ENCODE measurements at regions of chrX and their contacts with region 1.

Region 1: DNA sequence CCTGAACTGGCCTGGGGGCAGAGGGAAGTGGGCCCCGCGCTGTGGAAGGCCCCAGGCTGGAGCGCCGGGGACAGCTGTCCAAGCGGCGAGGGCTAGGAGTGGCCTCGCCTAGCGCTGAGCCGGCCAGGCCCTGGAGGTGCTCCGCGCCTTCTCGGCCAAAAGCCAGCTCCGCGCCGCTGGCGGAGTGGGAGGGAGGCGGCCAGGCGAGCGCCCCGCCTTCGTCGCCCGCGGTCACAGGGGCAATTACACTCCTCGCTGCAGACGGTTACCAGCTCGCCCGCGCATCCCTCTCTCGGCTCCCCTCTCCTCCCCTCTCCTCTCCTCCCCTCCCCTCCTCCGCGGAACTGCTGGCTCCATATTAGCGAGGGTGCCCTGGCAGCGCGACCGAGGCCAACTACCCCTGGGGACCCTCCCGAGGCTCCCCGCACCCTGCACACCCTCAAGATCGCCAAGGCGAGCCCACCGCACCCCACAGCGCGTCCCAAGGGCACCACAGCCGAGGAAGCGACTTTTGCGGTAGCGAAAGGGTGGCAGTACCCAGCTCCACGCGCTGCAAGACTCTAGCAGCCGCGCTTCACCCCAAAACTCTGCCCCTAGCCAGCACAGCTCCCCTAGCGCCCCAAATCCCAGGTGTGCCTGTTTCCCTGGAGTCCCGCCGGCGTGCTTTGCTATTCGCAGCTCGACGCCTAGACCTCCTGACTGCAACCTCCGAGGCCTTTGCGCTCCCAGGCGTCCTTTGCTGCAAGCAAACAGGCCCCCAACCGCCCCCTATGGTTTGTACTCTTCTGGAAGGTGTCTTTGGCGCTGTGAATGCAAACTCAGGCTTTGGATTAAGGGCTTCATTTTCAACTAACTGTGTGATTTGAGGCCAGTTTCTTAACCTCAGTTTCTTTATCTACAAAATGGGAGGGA is 91.4 kb downstream of the BCOR start:
- DNase-seq: peak in 6 of 7 donors; percentile 32 to 62 (median 36)
- H3K4me3 ChIP-seq: no peak overlapping the region
- H3K27ac ChIP-seq: no peak overlapping the region
- H3K4me1 ChIP-seq: no peaks in the 10 kb centered on the region
- H3K27me3 ChIP-seq: peaks cover 60% of the 10 kb centered on the region
- CTCF ChIP-seq: no peak
- POLR2A ChIP-seq: no peak

Region 2: DNA sequence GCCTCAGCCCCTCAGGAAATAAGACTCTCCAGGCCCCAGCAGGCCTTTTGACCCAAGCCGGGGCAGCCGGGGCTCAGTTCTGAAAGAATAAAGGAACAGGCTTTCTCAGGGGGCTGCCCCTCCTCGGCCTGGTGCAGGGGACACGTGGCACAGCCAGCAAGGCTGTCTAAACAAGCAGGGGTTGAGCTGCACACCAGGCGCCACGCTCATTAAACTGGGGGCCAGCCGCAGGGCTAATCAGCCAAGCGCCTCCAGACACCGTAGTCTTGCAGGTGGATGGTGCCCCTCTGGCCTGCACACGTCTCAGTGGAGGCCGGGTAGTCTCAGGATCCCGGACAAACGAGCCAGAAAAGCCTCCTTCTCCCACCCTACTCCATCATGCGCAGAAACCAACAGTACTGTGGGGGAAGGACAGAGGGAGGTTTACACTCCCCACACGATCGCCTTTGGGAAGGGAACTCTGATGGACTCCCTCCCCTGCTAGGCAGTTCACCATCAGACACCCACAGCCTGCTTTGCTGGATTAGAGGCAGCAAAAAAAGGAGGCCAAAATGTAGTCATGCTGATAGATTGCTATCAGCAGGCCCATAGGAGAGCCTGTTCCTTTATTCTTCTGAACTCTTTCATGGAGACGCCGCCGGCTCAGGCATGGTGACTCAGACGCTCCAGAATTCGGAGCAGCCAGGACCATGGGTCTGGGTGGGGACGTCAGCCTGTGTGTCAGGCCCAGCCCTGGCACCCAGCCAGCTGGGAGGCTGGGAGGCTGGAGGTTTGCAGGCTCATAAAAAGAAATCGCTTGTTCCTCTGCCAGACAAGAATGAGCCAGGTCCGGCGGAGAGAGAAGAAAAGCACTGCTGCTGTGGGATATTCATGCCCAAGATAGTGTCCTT is 251.0 kb before region 1 on chrX:
- intact Hi-C with region 1: no loop called
- DNase-seq: peak; percentile 83 to 94 (median 91)
- H3K4me3 ChIP-seq: no peak overlapping the region
- H3K27ac ChIP-seq: peak overlapping the region; percentile 51 to 87 (median 68)
- H3K4me1 ChIP-seq: no peaks in the 10 kb centered on the region
- H3K27me3 ChIP-seq: no peaks in the 10 kb centered on the region
- CTCF ChIP-seq: no peak
- POLR2A ChIP-seq: peak in 1 of 2 donors; percentile 68

Region 3: GRCh38 chrX:39848900-39849299 is 157.5 kb before region 1 on chrX:
- intact Hi-C with region 1: loop called in 1 of 2 experiments (anchors 10 kb)
- DNase-seq: peak in 3 of 7 donors; percentile 25 to 38 (median 27)
- H3K4me3 ChIP-seq: no peak overlapping the region
- H3K27ac ChIP-seq: peak overlapping the region in 1 of 5 donors; percentile 10
- H3K4me1 ChIP-seq: no peaks in the 10 kb centered on the region
- H3K27me3 ChIP-seq: no peaks in the 10 kb centered on the region
- CTCF ChIP-seq: no peak
- POLR2A ChIP-seq: no peak

Region 4: GRCh38 chrX:40158036-40158706 is 151.8 kb after region 1 on chrX:
- intact Hi-C with region 1: no loop called
- DNase-seq: peak in 2 of 7 donors; percentile 27 to 50
- H3K4me3 ChIP-seq: peak overlapping the region in 1 of 4 donors; percentile 66
- H3K27ac ChIP-seq: peak overlapping the region in 4 of 5 donors; percentile 54 to 84 (median 74)
- H3K4me1 ChIP-seq: peaks cover 11 to 21% of the 10 kb centered on the region in 2 donors
- H3K27me3 ChIP-seq: peaks cover 14% of the 10 kb centered on the region
- CTCF ChIP-seq: peak in 3 of 6 experiments; percentile 48 to 75 (median 65)
- POLR2A ChIP-seq: peak in 1 of 2 donors; percentile 41

Measured in adrenal gland (tissue), 19 donors.